ENCODE measurements at regions of chr15 and their contacts with region 1.

Region 1: GRCh38 chr15:90071208-90071807 is 31.0 kb downstream of the IDH2 start:
- DNase-seq: peak; percentile 89
- H3K4me3 ChIP-seq: no peak overlapping the region
- H3K27ac ChIP-seq: peak overlapping the region in 3 of 4 donors; percentile 37 to 48 (median 42)
- H3K4me1 ChIP-seq: peaks cover 0 to 15% (median 0%) of the 10 kb centered on the region in 4 donors
- H3K27me3 ChIP-seq: no peaks in the 10 kb centered on the region
- CTCF ChIP-seq: peak; percentile 72 to 92 (median 79)
- EP300 ChIP-seq: no peak
- POLR2A ChIP-seq: no peak

Region 2: DNA sequence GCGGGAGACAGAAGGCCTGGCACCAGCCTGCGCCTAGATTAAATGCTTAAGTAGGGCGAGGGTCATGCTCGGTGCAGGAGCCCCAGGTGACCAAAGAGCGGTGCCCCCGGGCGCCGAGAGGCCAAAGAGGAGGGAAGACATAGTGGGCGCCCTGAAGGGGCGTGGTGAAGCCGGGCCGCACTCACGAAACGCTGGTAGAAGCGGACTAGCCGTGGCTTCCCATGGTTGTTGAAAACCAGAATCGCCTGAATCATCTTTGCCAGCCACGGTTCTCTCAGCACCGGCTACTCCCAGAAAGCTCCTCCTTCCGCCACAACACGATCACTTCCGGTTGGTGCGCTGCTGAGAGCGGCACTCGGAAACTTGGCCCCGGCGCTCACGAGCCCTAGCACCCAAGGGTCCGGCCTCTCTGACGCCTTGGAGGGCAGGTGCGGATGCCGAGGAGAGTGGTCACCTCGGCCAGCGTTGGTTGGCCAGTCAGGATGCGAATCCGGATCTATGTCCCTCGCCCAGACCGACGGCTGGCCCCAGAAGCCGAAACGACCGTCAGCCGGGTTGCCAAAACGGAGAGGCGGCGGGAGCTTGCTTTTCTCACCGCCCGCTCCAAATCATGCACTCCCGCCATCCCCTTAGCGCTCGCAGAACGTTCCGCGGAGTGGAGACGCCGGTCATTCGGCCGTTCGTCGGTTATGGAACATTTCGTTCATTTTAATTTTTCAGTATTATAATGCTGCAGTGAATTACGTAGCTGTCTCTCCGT is 177.4 kb before region 1 on chr15 and contains the start of gene AP3S2:
- in situ Hi-C with region 1: loop called in 3 of 4 experiments (anchors 5 to 10 kb)
- intact Hi-C with region 1: no loop called
- DNase-seq: peak; percentile 93
- H3K4me3 ChIP-seq: peak within 1 kb of the TSS; percentile 62 to 96 (median 74)
- H3K27ac ChIP-seq: peak within 1 kb of the TSS; percentile 90 to 97 (median 92)
- H3K4me1 ChIP-seq: peaks cover 7 to 30% (median 16%) of the 10 kb centered on the region in 4 donors
- H3K27me3 ChIP-seq: no peaks in the 10 kb centered on the region
- CTCF ChIP-seq: no peak
- EP300 ChIP-seq: no peak
- POLR2A ChIP-seq: peak; percentile 78
- total RNA-seq, gene AP3S2: 20.9 to 90.0 (median 72.6) TPM

Region 3: DNA sequence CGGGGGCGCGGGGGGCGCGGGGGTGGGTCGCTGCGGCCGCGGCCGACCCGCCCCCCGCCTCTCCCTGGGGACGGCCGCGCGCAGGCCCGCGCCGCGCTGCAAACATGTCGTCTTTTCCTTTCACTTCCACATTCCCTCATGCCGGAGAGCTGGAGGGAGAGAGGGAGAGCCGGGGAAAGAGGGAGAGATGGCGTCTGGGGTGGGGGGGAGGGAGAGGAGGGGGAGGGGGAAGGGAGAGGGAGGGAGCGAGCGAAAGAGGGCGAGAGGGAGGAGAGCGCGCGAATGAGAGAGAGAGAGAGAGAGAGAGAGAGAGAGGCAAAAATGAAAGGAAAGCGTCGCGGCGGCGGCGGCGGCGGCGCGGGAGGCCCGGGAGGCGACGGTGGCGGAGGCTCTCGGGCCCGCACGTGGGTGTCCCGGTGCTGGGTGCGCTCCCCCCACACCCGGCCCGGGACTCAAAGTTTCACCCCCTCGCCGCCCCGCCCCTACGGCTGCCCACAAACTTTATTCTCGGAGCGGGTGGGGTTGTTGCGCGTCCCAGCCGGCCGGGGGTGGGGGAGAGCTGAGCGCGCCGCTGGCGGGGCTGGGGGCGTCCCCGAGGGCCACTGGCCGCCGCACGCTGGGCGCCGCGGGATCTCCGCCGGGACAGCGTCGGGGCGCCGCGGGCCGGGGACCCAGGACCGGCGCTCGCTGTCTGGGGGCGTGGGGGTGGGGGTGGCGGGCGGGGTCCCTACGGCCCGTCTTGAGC is 69.5 kb before region 1 on chr15:
- in situ Hi-C with region 1: no loop called
- intact Hi-C with region 1: no loop called
- DNase-seq: peak; percentile 80
- H3K4me3 ChIP-seq: peak overlapping the region; percentile 72 to 95 (median 90)
- H3K27ac ChIP-seq: peak overlapping the region; percentile 91 to 96 (median 94)
- H3K4me1 ChIP-seq: peaks cover 32 to 74% (median 59%) of the 10 kb centered on the region in 4 donors
- H3K27me3 ChIP-seq: no peaks in the 10 kb centered on the region
- CTCF ChIP-seq: no peak
- EP300 ChIP-seq: no peak
- POLR2A ChIP-seq: peak; percentile 31

Region 4: DNA sequence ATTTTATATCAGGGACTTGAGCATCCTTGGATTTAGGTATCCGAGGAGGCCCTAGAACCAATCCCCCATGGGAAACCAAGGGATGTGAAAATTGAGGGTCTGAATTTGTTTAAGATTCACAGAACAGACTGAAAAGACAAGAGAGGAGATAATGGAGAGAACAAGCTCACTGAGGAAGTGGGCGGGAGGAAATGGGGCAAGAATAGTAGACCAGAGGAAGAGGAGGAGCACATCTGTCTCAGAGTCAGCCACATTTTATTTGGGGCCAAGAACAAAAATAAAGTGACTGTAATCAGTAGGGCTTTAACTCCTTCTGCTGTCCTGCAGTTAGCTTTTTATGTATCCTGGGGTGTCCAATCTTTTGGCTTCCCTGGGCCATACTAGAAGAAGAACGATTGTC is 709.6 kb after region 1 on chr15:
- in situ Hi-C with region 1: no loop called
- intact Hi-C with region 1: loop called (anchors 5 kb)
- DNase-seq: no peak
- H3K4me3 ChIP-seq: no peak overlapping the region
- H3K27ac ChIP-seq: no peak overlapping the region
- H3K4me1 ChIP-seq: no peaks in the 10 kb centered on the region
- H3K27me3 ChIP-seq: no peaks in the 10 kb centered on the region
- CTCF ChIP-seq: no peak
- EP300 ChIP-seq: no peak
- POLR2A ChIP-seq: no peak

Measured in transverse colon (tissue), 4 donors.